ENCODE measurements at regions of chr15 and their contacts with region 1.

Region 1: GRCh38 chr15:40440743-40441564 is at the start of gene BAHD1:
- DNase-seq: peak; percentile 98
- H3K4me3 ChIP-seq: peak within 1 kb of the TSS; percentile 80 to 90 (median 84)
- H3K27ac ChIP-seq: peak within 1 kb of the TSS; percentile 24 to 76 (median 75)
- H3K4me1 ChIP-seq: peaks cover 38 to 57% of the 10 kb centered on the region in 2 donors
- H3K27me3 ChIP-seq: no peaks in the 10 kb centered on the region
- CTCF ChIP-seq: peak in 1 of 6 experiments; percentile 8
- POLR2A ChIP-seq: peak in 1 of 2 donors; percentile 72
- total RNA-seq, gene BAHD1: 20.0 to 50.4 (median 35.1) TPM

Region 2: DNA sequence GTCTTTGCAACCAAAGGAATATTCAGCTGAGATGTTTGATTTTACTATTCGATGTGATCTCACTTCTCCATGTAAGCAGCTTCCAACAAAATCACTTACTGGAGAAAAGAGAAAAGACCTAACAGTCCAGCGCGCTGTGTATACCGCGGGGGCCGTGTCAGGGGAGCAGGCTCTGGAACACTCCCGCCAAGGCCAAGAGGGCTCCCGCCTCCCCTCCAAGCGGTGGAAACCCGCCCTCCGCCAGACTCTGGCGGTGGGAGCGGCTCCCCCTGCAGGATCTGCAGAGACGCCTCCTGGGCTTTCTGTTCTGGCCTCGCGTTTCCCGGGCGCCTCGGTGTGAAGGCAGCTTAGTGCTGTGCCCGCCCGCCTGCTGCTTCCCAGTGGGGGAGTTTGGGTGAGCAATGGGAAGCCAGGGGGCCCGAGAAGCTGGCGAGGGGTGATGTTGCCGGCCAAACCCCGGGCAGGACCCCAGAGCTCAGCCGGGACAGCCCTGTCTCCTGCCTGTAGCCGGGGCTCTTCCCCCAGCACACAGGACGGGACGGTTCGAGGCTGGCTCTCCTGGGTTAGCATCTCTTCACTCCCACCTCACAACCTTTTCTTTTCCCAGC is 66.1 kb after region 1 on chr15:
- intact Hi-C with region 1: loop called (anchors 10 kb)
- DNase-seq: peak; percentile 82 to 85
- H3K4me3 ChIP-seq: no peak overlapping the region
- H3K27ac ChIP-seq: no peak overlapping the region
- H3K4me1 ChIP-seq: peaks cover 0 to 7% of the 10 kb centered on the region in 2 donors
- H3K27me3 ChIP-seq: no peaks in the 10 kb centered on the region
- CTCF ChIP-seq: peak; percentile 57 to 81 (median 70)
- POLR2A ChIP-seq: no peak